Activated naive CD4-positive, alpha-beta T cell treated with anti-CD3 and anti-CD28 coated beads for 36 hours (primary cell): ENCODE measurements at regions of chr5 and their contacts with region 1.

Region 1: DNA sequence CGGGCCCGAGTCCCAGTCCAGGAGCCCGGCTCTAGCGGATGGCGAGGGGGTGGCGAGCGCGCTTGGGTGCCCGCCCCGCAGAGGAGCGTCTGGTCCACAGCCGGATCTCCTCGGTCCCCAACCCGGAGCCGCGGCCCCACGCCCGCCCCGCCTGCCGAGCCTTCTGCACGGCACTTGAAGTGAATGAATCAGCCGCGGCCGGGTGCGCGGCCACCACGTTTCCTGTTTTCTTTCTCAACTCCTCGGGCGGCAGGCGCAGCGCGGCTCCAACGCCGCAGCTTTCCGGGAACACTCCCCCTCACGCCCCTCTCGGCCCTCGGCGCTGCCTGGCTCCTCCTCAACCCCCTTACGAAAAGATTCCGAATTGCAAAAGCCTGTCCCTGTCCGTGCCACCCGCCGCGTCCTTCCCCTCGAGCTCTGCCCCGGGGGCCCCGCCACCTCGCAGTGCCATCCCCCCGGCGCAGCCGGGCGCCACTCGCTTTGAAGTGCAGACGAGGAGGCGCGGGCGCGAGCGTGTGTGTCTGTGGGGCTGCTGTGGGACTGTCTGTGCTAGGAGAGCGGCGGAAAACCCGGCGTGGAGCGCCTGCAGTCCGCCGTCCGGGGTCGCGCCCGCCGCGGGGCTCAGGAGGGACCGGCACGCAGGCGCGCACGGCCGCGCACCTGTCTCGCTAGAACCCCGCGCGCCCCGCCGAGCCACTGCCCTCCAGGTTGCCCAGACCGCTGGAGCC is 456.6 kb downstream of the RAB3C start:
- DNase-seq: peak; percentile 90
- H3K4me3 Mint-ChIP-seq: peak overlapping the region; percentile 94
- H3K27ac Mint-ChIP-seq: peak overlapping the region; percentile 96
- H3K4me1 Mint-ChIP-seq: peaks cover 44% of the 10 kb centered on the region
- H3K27me3 Mint-ChIP-seq: no peaks in the 10 kb centered on the region

Region 2: DNA sequence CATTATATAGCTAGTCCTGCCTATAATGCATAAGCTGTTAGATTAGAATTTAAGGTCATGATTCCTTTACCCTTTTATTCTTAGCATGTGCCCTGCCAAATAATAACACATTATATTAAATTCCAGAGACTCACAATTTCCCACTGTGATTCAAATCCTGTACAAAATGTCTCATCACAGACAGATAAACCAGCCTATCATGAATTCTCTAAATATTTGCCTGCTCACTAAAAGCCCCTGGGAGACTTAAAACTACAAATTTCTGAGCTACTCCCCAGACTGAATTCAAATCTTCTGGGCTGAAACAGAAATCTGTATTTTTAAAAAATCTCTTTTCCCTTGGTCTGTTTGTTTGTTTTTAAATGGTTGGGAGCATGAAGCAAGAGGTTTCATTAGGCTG is 515.5 kb before region 1 on chr5:
- CTCF ChIA-PET with region 1: no interaction called
- intact Hi-C with region 1: no loop called
- DNase-seq: no peak
- H3K4me3 Mint-ChIP-seq: no peak overlapping the region
- H3K27ac Mint-ChIP-seq: no peak overlapping the region
- H3K4me1 Mint-ChIP-seq: no peaks in the 10 kb centered on the region
- H3K27me3 Mint-ChIP-seq: peaks cover 10% of the 10 kb centered on the region

Region 3: GRCh38 chr5:58687079-58687478 is 352.4 kb before region 1 on chr5:
- CTCF ChIA-PET with region 1: no interaction called
- intact Hi-C with region 1: no loop called
- DNase-seq: no peak
- H3K4me3 Mint-ChIP-seq: no peak overlapping the region
- H3K27ac Mint-ChIP-seq: no peak overlapping the region
- H3K4me1 Mint-ChIP-seq: no peaks in the 10 kb centered on the region
- H3K27me3 Mint-ChIP-seq: peaks cover 2% of the 10 kb centered on the region

Region 4: GRCh38 chr5:58933891-58934628 is 105.4 kb before region 1 on chr5:
- CTCF ChIA-PET with region 1: interaction called, 3 read pairs
- intact Hi-C with region 1: loop called (anchors 1 kb)
- DNase-seq: peak; percentile 76
- H3K4me3 Mint-ChIP-seq: peak overlapping the region; percentile 20
- H3K27ac Mint-ChIP-seq: peak overlapping the region; percentile 3
- H3K4me1 Mint-ChIP-seq: peaks cover 30% of the 10 kb centered on the region
- H3K27me3 Mint-ChIP-seq: no peaks in the 10 kb centered on the region

Region 5: DNA sequence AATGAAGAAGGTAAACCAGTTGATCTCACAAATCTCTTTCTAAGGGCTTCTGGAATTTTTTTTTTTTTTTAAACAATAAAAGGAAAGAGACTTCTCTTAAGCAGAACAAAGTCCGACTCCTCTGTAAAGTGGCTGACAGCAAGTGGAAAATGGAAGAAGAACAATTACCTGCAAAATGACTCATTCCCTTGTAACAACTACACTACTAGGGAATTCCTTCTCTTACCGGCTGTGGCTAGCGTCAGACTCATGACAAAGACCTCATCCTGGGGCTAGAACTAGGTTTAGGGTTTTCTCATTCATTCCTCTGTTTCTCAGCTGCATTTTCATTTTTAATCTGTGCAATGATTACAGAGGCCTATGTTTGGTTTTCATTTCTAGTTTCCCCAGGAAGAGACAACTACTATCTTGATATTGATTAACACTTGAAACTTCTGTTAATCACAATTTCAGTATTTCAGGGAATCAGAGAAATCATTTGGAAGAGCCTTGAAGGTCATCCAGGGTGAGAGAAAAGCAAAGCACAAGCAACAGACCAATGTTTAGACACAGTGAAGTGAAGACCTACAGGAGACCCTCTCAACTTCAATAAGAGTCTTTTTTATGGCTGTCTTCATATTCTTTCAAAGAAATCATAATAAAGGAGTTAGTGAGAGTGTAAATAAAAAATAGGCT is 18.7 kb before region 1 on chr5:
- CTCF ChIA-PET with region 1: interaction called, 13 read pairs
- intact Hi-C with region 1: loop called (anchors 1 kb)
- DNase-seq: peak; percentile 76
- H3K4me3 Mint-ChIP-seq: peak overlapping the region; percentile 42
- H3K27ac Mint-ChIP-seq: peak overlapping the region; percentile 89
- H3K4me1 Mint-ChIP-seq: peaks cover 57% of the 10 kb centered on the region
- H3K27me3 Mint-ChIP-seq: no peaks in the 10 kb centered on the region

Region 6: DNA sequence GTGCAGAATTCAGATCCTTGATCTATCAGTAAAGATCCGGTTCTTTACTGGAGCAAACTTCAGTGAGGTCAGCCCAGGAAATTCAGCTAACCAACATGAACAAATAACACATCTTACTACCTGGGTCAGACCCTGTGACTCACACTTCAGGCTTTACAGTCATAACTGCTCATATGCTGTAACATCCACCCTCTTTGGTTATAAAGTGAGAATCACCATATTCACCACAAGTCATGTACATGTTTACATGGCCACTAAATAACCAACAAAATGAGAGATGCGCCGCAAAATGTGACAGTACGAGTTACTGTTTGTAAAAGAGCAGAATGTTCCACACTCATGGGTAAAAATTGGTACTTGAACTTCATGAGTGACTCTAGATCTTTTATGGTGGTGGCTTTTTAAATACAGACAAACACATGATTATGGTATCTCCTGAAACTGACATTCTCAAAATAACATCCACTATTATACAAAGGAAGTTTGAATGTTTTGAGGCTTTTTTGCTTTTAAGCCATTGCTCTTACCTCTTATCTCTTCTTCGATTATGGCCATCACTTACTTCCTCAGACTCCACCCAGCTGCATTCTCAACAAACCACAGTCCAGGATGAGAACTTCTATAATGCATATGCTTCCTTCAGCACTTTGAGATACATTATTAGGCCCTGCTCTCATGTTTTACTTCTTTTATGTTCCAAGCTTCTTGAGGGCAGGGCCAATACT is 60.0 kb after region 1 on chr5:
- CTCF ChIA-PET with region 1: interaction called, 3 read pairs
- intact Hi-C with region 1: loop called (anchors 1 kb)
- DNase-seq: peak; percentile 68
- H3K4me3 Mint-ChIP-seq: no peak overlapping the region
- H3K27ac Mint-ChIP-seq: peak overlapping the region; percentile 20
- H3K4me1 Mint-ChIP-seq: peaks cover 32% of the 10 kb centered on the region
- H3K27me3 Mint-ChIP-seq: no peaks in the 10 kb centered on the region

Region 7: DNA sequence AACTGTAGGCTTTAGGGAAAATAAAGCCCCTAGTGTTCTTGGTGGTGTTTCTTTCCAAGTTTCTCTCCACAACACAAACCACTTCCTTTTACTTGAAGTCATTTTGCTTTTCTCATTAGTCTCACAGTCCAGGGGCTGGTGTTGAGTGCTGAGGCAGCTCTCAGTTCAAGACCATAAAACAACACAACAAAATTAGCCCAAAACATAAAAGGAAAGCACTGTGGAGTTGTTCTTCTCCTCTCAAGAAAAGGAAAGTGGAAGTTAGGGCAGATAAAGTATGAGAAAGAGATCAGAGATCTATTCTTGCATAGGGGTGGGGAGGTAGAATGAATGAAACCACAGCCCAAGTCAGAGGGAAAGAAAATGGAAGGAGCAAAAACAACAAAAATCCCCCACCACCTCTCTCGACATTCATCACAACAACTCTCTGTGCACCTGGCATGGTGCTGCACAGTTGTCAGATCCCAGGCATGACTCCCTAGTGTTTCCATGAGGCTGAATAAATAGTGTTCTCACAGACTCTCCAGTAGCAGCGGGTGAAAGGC is 113.3 kb after region 1 on chr5:
- CTCF ChIA-PET with region 1: interaction called, 4 read pairs
- intact Hi-C with region 1: loop called (anchors 1 kb)
- DNase-seq: peak; percentile 19
- H3K4me3 Mint-ChIP-seq: no peak overlapping the region
- H3K27ac Mint-ChIP-seq: peak overlapping the region; percentile 71
- H3K4me1 Mint-ChIP-seq: peaks cover 3% of the 10 kb centered on the region
- H3K27me3 Mint-ChIP-seq: no peaks in the 10 kb centered on the region

Region 8: DNA sequence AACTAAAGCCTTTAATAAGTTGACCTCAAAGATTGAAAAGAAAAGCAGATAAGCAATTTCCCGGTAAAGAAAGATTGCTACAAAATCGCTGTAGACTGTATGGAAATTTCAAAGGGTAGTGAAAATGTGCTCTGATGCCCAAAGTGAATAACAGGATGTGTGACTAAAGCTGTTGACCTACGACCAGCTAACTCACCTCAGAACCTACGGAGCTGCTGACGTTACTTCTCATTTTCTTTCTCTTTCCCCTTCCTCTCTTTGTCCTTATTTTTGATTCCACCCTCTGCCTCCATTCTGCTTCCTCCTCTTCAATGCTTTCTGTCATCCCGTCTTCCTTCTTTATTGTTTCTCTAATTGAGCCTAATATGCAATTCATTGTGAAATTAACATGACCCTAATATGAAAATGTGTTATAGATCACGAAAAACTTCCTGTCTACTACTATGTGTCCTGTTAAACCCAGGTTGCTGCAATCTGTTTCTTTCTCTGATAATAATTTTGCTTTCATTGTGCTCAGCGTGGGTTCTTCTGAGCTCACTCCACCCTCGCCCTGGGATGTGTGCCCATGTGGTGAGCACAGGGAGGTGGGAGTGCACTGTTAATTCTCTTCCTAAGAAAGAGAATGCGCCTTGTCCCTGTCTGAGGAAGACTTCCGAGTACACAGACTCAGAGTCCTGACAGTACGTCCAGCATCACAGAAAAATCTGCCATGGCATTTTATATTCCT is 751.1 kb after region 1 on chr5:
- CTCF ChIA-PET with region 1: no interaction called
- intact Hi-C with region 1: loop called (anchors 2 kb)
- DNase-seq: no peak
- H3K4me3 Mint-ChIP-seq: peak overlapping the region; percentile 40
- H3K27ac Mint-ChIP-seq: peak overlapping the region; percentile 68
- H3K4me1 Mint-ChIP-seq: peaks cover 20% of the 10 kb centered on the region
- H3K27me3 Mint-ChIP-seq: peaks cover 24% of the 10 kb centered on the region